Dendritic cell treated with granulocyte-macrophage colony-stimulating factor and Interleukin-4, amounts not matched to agents 40 ng/mL and 50 ng/mL, for 4 days (primary cell): ENCODE measurements at regions of chr10 and their contacts with region 1.

Region 1: DNA sequence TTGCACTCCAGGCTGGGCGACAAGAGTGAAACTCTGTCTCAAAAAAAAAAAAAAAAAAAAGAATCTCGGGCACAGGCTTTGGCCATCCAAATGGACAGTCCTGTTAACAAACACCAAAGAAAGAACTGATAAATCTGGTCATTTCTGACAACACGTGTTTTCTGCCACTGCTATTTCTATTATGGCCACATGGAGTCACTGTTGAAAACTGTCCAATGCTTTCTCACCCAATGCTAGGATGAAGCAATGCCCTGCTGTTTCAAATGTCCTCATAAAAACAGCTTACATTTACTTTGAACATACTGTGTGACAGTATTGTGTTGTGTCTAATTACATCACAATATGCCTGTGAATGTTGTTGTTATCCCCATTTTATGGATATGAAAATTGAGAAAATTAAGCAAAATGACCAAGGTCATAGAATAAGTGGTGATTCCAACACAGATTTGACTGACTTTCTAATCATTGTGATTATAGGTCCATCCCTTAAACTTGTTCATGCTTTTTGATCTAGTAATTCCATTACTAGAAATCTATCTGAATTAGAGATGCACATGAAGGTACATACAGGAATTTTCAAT is 19.9 kb upstream of the MAP3K8 start:
- H3K4me3 Mint-ChIP-seq: no peak overlapping the region
- H3K27ac Mint-ChIP-seq: no peak overlapping the region
- H3K4me1 Mint-ChIP-seq: peaks cover 25% of the 10 kb centered on the region
- H3K27me3 Mint-ChIP-seq: no peaks in the 10 kb centered on the region

Region 2: GRCh38 chr10:29746080-29746797 is 667.8 kb before region 1 on chr10:
- intact Hi-C with region 1: no loop called
- H3K4me3 Mint-ChIP-seq: no peak overlapping the region
- H3K27ac Mint-ChIP-seq: no peak overlapping the region
- H3K4me1 Mint-ChIP-seq: no peaks in the 10 kb centered on the region
- H3K27me3 Mint-ChIP-seq: peaks cover 2% of the 10 kb centered on the region

Region 3: DNA sequence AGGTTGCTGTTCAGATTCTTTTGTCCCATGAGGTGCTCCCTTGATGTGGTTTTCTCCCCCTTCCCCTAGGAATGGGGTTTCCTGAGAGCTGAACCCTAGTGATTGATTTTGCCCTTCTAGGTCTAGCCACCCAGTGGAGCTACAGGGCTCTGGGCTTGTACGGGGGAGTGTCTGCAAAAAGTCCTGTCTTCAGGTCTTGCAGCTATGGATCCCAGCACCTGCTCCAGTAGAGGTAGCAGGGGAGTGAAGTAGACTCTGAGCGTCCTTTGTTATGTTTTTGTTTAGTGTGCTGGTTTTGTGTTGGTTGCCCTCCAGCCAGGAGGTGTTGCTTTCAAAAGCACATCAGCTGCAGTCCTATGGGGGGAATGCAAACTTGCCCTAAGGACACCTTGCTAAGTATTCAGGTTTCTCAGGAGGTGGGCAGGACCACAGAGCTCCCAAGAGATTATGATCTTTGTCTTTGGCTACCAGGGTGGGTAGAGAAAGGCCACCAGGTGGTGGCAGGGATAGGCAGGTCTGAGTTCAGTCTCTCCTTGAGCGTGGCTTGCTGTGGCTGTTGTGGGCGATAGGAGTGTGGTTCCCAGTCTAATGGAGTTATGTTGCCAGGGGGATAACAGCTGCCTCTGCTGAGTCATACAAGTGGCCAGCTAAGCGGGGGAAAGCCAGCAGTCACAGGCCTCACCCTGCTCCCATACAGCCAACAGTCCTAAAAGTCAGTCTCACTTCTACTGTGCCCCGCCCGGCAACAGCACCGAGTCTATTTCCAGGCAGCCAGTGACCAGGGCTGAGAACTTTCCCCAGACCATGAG is 262.3 kb before region 1 on chr10:
- intact Hi-C with region 1: no loop called
- H3K4me3 Mint-ChIP-seq: no peak overlapping the region
- H3K27ac Mint-ChIP-seq: peak overlapping the region; percentile 74
- H3K4me1 Mint-ChIP-seq: peaks cover 7% of the 10 kb centered on the region
- H3K27me3 Mint-ChIP-seq: no peaks in the 10 kb centered on the region

Region 4: DNA sequence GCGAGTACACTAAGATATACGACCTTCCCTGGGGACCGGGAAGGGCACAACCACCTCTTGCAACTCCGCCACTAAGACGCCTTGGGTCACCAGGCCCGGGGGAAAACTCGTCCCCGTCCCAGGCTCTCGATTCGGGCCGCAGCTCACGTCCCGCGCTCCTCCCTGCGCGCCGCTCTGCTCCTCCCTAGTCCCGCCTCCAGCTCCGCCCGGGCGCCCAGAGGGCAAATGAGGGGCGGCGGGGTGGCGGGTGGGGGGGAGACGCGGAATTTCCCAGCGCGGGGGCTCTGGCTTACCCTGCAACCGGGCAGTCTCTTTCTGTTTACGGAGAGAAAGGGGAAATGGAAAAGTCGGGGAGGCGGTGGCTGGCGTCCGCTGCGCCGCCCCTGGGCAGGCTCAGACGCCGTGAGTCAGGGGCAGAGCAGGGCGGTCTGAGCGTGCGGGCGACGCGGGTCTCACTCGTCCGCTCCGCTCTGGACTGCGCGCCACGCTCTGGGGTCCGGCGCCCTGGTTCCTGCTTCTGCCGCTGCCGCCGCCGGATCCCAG is 19.7 kb after region 1 on chr10 and contains the start of gene MAP3K8:
- intact Hi-C with region 1: loop called (anchors 1 kb)
- H3K4me3 Mint-ChIP-seq: peak within 1 kb of the TSS; percentile 97
- H3K27ac Mint-ChIP-seq: peak within 1 kb of the TSS; percentile 97
- H3K4me1 Mint-ChIP-seq: peaks cover 56% of the 10 kb centered on the region
- H3K27me3 Mint-ChIP-seq: no peaks in the 10 kb centered on the region

Region 5: DNA sequence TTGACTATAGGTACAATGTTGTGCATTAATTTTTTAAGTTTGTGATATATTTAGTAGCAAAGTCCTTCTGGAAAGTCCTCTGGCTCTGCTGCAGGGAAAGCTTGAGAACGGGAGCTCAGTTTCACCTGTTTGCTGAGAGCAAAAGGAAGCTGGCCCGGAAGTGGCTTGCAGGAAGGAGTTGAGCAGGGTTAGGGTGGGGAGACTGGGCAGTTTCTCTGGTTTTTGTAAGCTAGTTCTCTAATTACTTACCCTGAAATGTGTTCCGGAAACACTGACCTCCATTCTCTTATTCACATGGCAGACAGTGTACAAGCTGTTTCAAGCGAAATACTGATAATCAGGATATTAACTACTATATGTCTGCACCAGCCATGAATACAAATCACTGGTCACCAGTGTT is 42.2 kb after region 1 on chr10:
- intact Hi-C with region 1: no loop called
- H3K4me3 Mint-ChIP-seq: no peak overlapping the region
- H3K27ac Mint-ChIP-seq: peak overlapping the region; percentile 84
- H3K4me1 Mint-ChIP-seq: peaks cover 44% of the 10 kb centered on the region
- H3K27me3 Mint-ChIP-seq: no peaks in the 10 kb centered on the region

Region 6: GRCh38 chr10:30534465-30535144 is 120.5 kb after region 1 on chr10:
- intact Hi-C with region 1: loop called (anchors 1 kb)
- H3K4me3 Mint-ChIP-seq: no peak overlapping the region
- H3K27ac Mint-ChIP-seq: peak overlapping the region; percentile 29
- H3K4me1 Mint-ChIP-seq: peaks cover 61% of the 10 kb centered on the region
- H3K27me3 Mint-ChIP-seq: no peaks in the 10 kb centered on the region

Region 7: GRCh38 chr10:30591249-30591670 is 177.2 kb after region 1 on chr10:
- intact Hi-C with region 1: loop called (anchors 5 kb)
- H3K4me3 Mint-ChIP-seq: no peak overlapping the region
- H3K27ac Mint-ChIP-seq: no peak overlapping the region
- H3K4me1 Mint-ChIP-seq: peaks cover 28% of the 10 kb centered on the region
- H3K27me3 Mint-ChIP-seq: peaks cover 6% of the 10 kb centered on the region